CD4-positive, alpha-beta T cell (primary cell): ENCODE measurements at regions of chr18 and their contacts with region 1.

Region 1: DNA sequence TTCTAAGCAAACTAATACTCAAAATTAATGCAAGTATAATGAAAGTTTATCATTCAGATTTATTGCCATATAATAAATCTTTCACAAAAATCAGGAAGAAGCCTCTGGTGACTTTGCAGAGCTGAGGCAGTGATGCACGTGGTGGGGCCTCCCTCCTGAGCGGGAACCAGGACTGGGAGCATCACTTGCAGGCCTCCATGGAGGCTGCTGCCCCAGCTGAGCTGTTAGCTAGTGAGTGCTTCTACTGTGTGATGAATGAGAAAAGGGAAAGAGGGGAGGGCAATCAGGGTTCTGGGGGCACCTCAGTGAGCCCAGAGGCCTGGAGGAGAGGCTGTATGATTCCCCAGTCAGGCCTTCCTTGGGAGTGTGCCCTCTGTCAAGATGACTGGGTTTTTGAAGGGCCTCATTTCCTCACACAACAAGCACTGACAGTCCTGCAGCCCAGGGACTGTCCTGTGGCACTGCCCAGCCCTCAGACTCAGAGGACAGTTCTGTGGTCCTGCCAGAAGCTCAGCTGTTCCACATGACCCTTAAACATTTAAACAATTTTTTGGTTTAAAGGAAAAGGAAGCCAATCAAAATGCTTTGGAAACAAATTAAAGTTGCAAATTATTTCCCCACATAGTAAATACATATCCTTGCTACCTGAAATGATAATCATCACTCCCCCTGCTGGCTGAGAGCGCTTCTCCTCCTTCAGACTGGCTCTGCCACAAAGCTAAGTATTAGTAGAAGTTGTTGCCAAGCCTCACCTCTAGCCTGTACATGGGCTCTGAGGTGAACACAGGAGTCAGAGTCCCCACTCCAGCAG is 90.9 kb upstream of the SMAD7 start:
- DNase-seq: peak; percentile 27 to 73 (median 52)
- ATAC-seq: peak; percentile 68
- H3K4me3 ChIP-seq: no peak overlapping the region
- H3K4me3 Mint-ChIP-seq: no peak overlapping the region
- H3K27ac ChIP-seq: no peak overlapping the region
- H3K27ac Mint-ChIP-seq: no peak overlapping the region
- H3K4me1 ChIP-seq: no peaks in the 10 kb centered on the region
- H3K4me1 Mint-ChIP-seq: peaks cover 8% of the 10 kb centered on the region
- H3K27me3 ChIP-seq: no peaks in the 10 kb centered on the region
- H3K27me3 Mint-ChIP-seq: no peaks in the 10 kb centered on the region
- CTCF ChIP-seq: peak; percentile 60

Region 2: GRCh38 chr18:48711651-48712486 is 329.8 kb before region 1 on chr18:
- CTCF ChIA-PET with region 1: no interaction called
- POLR2A ChIA-PET with region 1: no interaction called
- intact Hi-C with region 1: loop called in 1 of 2 experiments (anchors 1 kb)
- DNase-seq: peak in 6 of 14 experiments; percentile 4 to 54 (median 18)
- ATAC-seq: no peak
- H3K4me3 ChIP-seq: no peak overlapping the region
- H3K4me3 Mint-ChIP-seq: no peak overlapping the region
- H3K27ac ChIP-seq: no peak overlapping the region
- H3K27ac Mint-ChIP-seq: no peak overlapping the region
- H3K4me1 ChIP-seq: peaks cover 8% of the 10 kb centered on the region
- H3K4me1 Mint-ChIP-seq: no peaks in the 10 kb centered on the region
- H3K27me3 ChIP-seq: no peaks in the 10 kb centered on the region
- H3K27me3 Mint-ChIP-seq: no peaks in the 10 kb centered on the region
- CTCF ChIP-seq: peak; percentile 11

Region 3: GRCh38 chr18:49021433-49022129 is 20.1 kb before region 1 on chr18:
- CTCF ChIA-PET with region 1: no interaction called
- POLR2A ChIA-PET with region 1: no interaction called
- intact Hi-C with region 1: no loop called
- DNase-seq: peak in 8 of 14 experiments; percentile 17 to 59 (median 28)
- ATAC-seq: no peak
- H3K4me3 ChIP-seq: no peak overlapping the region
- H3K4me3 Mint-ChIP-seq: no peak overlapping the region
- H3K27ac ChIP-seq: no peak overlapping the region
- H3K27ac Mint-ChIP-seq: no peak overlapping the region
- H3K4me1 ChIP-seq: peaks cover 5% of the 10 kb centered on the region
- H3K4me1 Mint-ChIP-seq: peaks cover 5% of the 10 kb centered on the region
- H3K27me3 ChIP-seq: peaks cover 0 to 2% of the 10 kb centered on the region in 2 experiments
- H3K27me3 Mint-ChIP-seq: no peaks in the 10 kb centered on the region
- CTCF ChIP-seq: no peak

Region 4: GRCh38 chr18:49135877-49136276 is 94.2 kb after region 1 on chr18:
- CTCF ChIA-PET with region 1: no interaction called
- POLR2A ChIA-PET with region 1: no interaction called
- intact Hi-C with region 1: no loop called
- DNase-seq: no peak
- ATAC-seq: no peak
- H3K4me3 ChIP-seq: no peak overlapping the region
- H3K4me3 Mint-ChIP-seq: no peak overlapping the region
- H3K27ac ChIP-seq: no peak overlapping the region
- H3K27ac Mint-ChIP-seq: no peak overlapping the region
- H3K4me1 ChIP-seq: no peaks in the 10 kb centered on the region
- H3K4me1 Mint-ChIP-seq: no peaks in the 10 kb centered on the region
- H3K27me3 ChIP-seq: no peaks in the 10 kb centered on the region
- H3K27me3 Mint-ChIP-seq: no peaks in the 10 kb centered on the region
- CTCF ChIP-seq: no peak